B cell (primary cell): ENCODE measurements at regions of chr15 and their contacts with region 1.

Region 1: GRCh38 chr15:63514531-63514943 is 10.1 kb downstream of the USP3 start:
- DNase-seq: no peak
- ATAC-seq: peak; percentile 37
- H3K4me3 ChIP-seq: no peak overlapping the region
- H3K4me3 Mint-ChIP-seq: peak overlapping the region; percentile 14
- H3K27ac ChIP-seq: peak overlapping the region in 1 of 2 donors; percentile 60
- H3K27ac Mint-ChIP-seq: no peak overlapping the region
- H3K4me1 ChIP-seq: peaks cover 66 to 87% of the 10 kb centered on the region in 2 donors
- H3K4me1 Mint-ChIP-seq: peaks cover 81% of the 10 kb centered on the region
- H3K27me3 ChIP-seq: no peaks in the 10 kb centered on the region
- H3K27me3 Mint-ChIP-seq: no peaks in the 10 kb centered on the region
- CTCF ChIP-seq: no peak

Region 2: DNA sequence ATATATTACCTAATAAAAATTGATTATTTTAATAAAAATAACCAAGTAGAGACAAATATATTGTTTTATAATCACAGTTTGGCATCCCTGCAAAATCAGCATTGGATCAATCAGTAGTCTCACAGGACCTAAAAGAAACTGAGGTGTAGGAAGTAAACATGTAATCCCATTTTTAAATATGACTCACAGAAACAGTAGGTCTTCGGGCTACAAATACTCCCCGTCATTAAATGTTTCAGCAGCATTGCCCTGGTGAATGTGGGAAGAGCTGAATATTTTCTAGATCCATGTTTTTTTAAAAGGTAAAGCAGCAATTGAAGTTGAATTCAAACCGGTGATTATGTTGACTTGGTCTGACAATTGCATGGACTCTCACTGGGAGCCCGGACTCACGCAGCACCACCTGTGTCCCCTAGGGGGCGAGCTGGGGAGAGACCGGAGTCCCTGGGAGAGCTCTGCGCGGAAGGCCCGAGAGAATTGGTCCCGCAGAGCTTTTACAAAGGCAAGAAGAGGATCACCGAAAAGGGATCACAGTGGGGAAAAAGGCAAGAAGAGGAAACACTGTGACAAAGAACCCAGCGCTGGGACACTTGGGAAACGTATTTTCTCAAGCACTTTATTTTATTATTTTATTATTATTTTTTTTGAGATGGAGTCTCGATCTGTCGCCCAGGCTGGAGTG is 27.3 kb before region 1 on chr15:
- CTCF ChIA-PET with region 1: interaction called, 17 read pairs
- POLR2A ChIA-PET with region 1: no interaction called
- intact Hi-C with region 1: no loop called
- DNase-seq: peak; percentile 86
- ATAC-seq: peak; percentile 68
- H3K4me3 ChIP-seq: no peak overlapping the region
- H3K4me3 Mint-ChIP-seq: peak overlapping the region; percentile 80
- H3K27ac ChIP-seq: no peak overlapping the region
- H3K27ac Mint-ChIP-seq: peak overlapping the region; percentile 89
- H3K4me1 ChIP-seq: peaks cover 53 to 78% of the 10 kb centered on the region in 2 donors
- H3K4me1 Mint-ChIP-seq: peaks cover 64% of the 10 kb centered on the region
- H3K27me3 ChIP-seq: no peaks in the 10 kb centered on the region
- H3K27me3 Mint-ChIP-seq: no peaks in the 10 kb centered on the region
- CTCF ChIP-seq: peak; percentile 90

Region 3: DNA sequence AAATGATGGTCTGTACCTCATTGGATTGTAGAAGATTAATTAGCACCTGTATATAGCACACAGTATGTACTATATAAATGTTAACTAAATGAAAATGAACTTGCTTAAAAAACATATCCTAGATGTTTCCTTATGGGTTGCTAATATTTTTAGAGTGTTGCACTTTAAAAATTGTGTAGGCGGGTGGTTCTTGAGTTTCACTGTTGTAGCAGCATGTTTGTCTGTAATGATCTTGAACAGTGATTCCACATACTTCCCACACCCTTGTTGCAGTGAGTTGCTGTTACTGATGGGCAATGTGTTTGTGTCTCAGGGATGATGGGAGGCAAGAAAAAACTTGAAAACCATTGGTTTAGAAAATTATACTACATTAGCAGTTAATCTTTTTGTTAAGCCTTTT is 11.9 kb after region 1 on chr15:
- CTCF ChIA-PET with region 1: interaction called, 14 read pairs
- POLR2A ChIA-PET with region 1: no interaction called
- intact Hi-C with region 1: loop called (anchors 2 kb)
- DNase-seq: no peak
- ATAC-seq: no peak
- H3K4me3 ChIP-seq: no peak overlapping the region
- H3K4me3 Mint-ChIP-seq: no peak overlapping the region
- H3K27ac ChIP-seq: no peak overlapping the region
- H3K27ac Mint-ChIP-seq: peak overlapping the region; percentile 28
- H3K4me1 ChIP-seq: peaks cover 58 to 69% of the 10 kb centered on the region in 2 donors
- H3K4me1 Mint-ChIP-seq: peaks cover 91% of the 10 kb centered on the region
- H3K27me3 ChIP-seq: no peaks in the 10 kb centered on the region
- H3K27me3 Mint-ChIP-seq: no peaks in the 10 kb centered on the region
- CTCF ChIP-seq: no peak

Region 4: DNA sequence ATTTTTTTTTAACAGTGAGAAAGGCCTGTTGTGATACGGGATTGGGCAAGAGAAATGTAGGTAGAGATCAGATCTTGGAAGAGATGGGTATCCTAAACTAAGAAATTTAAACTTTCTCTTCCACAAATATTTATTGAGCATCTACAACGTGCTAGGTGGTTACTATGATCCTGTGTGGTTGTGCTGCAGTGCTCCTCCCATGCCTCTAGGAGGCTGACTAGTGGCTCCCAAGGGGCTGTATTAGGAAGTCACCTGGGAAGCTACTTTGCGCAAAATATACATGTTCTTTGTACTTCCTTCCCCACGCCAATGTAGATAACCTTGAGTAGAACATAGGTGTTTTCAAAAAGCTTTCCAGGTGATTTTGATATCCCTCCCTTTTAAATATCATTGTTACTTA is 17.0 kb after region 1 on chr15:
- CTCF ChIA-PET with region 1: interaction called, 14 read pairs
- POLR2A ChIA-PET with region 1: no interaction called
- intact Hi-C with region 1: loop called (anchors 2 kb)
- DNase-seq: peak; percentile 35
- ATAC-seq: peak; percentile 44
- H3K4me3 ChIP-seq: no peak overlapping the region
- H3K4me3 Mint-ChIP-seq: peak overlapping the region; percentile 0
- H3K27ac ChIP-seq: peak overlapping the region in 1 of 2 donors; percentile 10
- H3K27ac Mint-ChIP-seq: no peak overlapping the region
- H3K4me1 ChIP-seq: peaks cover 42 to 60% of the 10 kb centered on the region in 2 donors
- H3K4me1 Mint-ChIP-seq: peaks cover 91% of the 10 kb centered on the region
- H3K27me3 ChIP-seq: no peaks in the 10 kb centered on the region
- H3K27me3 Mint-ChIP-seq: no peaks in the 10 kb centered on the region
- CTCF ChIP-seq: no peak